Sigmoid colon (tissue), 7 donors: ENCODE measurements at regions of chrX and their contacts with region 1.

Region 1: GRCh38 chrX:155056877-155057792 is 13.8 kb downstream of the CMC4 start:
- DNase-seq: peak; percentile 81
- H3K4me3 ChIP-seq: peak overlapping the region in 1 of 4 donors; percentile 12
- H3K27ac ChIP-seq: peak overlapping the region; percentile 55 to 59 (median 57)
- H3K4me1 ChIP-seq: peaks cover 0 to 6% (median 2%) of the 10 kb centered on the region in 4 donors
- H3K27me3 ChIP-seq: no peaks in the 10 kb centered on the region
- CTCF ChIP-seq: peak; percentile 44 to 66 (median 59)
- EP300 ChIP-seq: no peak
- POLR2A ChIP-seq: no peak

Region 2: DNA sequence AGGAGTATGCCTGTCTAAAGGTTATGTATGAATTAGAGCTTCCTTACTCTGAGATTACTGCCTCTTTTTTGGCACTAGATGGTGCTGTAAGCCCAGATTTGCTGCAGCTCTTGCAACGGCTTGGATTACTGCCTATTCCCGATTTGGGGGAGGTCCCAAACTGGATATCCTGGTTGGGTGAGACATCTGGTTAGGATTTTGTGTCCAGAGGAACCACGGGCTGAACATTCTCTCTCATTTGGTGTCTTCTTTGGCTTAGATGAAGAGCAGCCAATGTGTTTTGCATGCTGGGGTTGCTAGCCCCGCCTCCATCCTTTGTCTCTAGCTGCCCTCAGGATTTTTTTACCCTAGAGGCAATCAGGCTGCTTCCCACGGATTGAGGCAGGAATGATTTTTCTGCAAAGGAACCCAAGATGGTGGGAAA is 139.1 kb before region 1 on chrX:
- intact Hi-C with region 1: loop called (anchors 10 kb)
- DNase-seq: peak; percentile 86
- H3K4me3 ChIP-seq: peak overlapping the region in 1 of 4 donors; percentile 13
- H3K27ac ChIP-seq: no peak overlapping the region
- H3K4me1 ChIP-seq: no peaks in the 10 kb centered on the region
- H3K27me3 ChIP-seq: no peaks in the 10 kb centered on the region
- CTCF ChIP-seq: peak in 3 of 4 experiments; percentile 17 to 49 (median 18)
- EP300 ChIP-seq: no peak
- POLR2A ChIP-seq: no peak

Region 3: DNA sequence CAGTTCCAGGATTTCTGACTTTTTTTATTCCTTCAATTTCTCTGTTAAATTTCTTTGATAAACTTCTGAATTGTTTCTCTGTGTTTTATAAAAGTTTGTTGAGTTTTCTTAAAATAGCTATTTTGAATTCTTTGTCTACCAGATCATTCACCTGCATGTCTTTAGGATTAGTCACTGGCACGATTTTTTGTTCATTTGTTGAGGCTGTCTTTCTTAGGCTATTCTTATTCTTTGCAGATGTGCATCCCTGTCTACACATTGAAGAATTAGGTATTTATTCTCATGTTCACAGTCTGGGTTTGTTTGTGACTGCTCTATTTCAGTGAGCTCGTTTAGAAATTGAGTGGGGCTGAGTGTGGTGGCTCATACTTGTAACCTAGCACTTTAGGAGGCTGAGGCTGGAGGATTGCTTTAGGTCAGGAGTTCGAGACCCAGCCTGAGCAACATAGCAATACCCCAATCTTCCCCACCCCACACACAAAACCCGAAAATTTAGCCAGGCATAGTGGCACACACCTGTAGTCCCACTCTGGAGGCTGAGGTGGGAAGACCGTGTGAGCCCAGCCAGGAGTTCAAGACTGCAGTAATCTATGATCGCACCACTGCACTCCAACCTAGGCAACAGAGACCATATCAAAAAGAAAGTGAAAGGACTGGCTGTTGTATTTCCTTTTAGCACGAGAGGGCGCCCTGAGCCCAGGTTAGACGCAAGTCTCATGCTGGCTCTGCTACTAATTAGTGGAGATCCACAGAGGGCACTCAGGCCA is 76.6 kb before region 1 on chrX:
- intact Hi-C with region 1: loop called (anchors 1 kb)
- DNase-seq: peak; percentile 83
- H3K4me3 ChIP-seq: peak overlapping the region; percentile 10 to 46 (median 38)
- H3K27ac ChIP-seq: no peak overlapping the region
- H3K4me1 ChIP-seq: no peaks in the 10 kb centered on the region
- H3K27me3 ChIP-seq: no peaks in the 10 kb centered on the region
- CTCF ChIP-seq: peak; percentile 34 to 65 (median 52)
- EP300 ChIP-seq: no peak
- POLR2A ChIP-seq: no peak

Region 4: GRCh38 chrX:155009994-155010472 is 47.1 kb before region 1 on chrX:
- intact Hi-C with region 1: no loop called
- DNase-seq: no peak
- H3K4me3 ChIP-seq: no peak overlapping the region
- H3K27ac ChIP-seq: peak overlapping the region in 2 of 4 donors; percentile 25 to 45
- H3K4me1 ChIP-seq: no peaks in the 10 kb centered on the region
- H3K27me3 ChIP-seq: no peaks in the 10 kb centered on the region
- CTCF ChIP-seq: no peak
- EP300 ChIP-seq: no peak
- POLR2A ChIP-seq: no peak

Region 5: GRCh38 chrX:155026726-155027508 is 30.2 kb before region 1 on chrX and contains the start of gene FUNDC2:
- intact Hi-C with region 1: loop called (anchors 2 kb)
- DNase-seq: peak; percentile 97
- H3K4me3 ChIP-seq: peak within 1 kb of the TSS; percentile 46 to 65 (median 62)
- H3K27ac ChIP-seq: peak within 1 kb of the TSS; percentile 90 to 96 (median 94)
- H3K4me1 ChIP-seq: peaks cover 0 to 14% (median 9%) of the 10 kb centered on the region in 4 donors
- H3K27me3 ChIP-seq: no peaks in the 10 kb centered on the region
- CTCF ChIP-seq: no peak
- EP300 ChIP-seq: peak; percentile 35 to 85 (median 74)
- POLR2A ChIP-seq: peak; percentile 29 to 36
- total RNA-seq, gene FUNDC2: 83.1 to 101 (median 97.6) TPM

Region 6: GRCh38 chrX:155046129-155046810 is 10.9 kb before region 1 on chrX:
- intact Hi-C with region 1: no loop called
- DNase-seq: no peak
- H3K4me3 ChIP-seq: no peak overlapping the region
- H3K27ac ChIP-seq: no peak overlapping the region
- H3K4me1 ChIP-seq: no peaks in the 10 kb centered on the region
- H3K27me3 ChIP-seq: no peaks in the 10 kb centered on the region
- CTCF ChIP-seq: no peak
- EP300 ChIP-seq: no peak
- POLR2A ChIP-seq: no peak

Region 7: GRCh38 chrX:155148724-155149537 is 91.8 kb after region 1 on chrX:
- intact Hi-C with region 1: no loop called
- DNase-seq: no peak
- H3K4me3 ChIP-seq: no peak overlapping the region
- H3K27ac ChIP-seq: no peak overlapping the region
- H3K4me1 ChIP-seq: no peaks in the 10 kb centered on the region
- H3K27me3 ChIP-seq: no peaks in the 10 kb centered on the region
- CTCF ChIP-seq: peak in 1 of 4 experiments; percentile 25
- EP300 ChIP-seq: no peak
- POLR2A ChIP-seq: no peak